ENCODE measurements at regions of chr5 and their contacts with region 1.

Region 1: GRCh38 chr5:150523472-150524350 is 15.8 kb downstream of the NDST1 start:
- DNase-seq: no peak

Region 2: DNA sequence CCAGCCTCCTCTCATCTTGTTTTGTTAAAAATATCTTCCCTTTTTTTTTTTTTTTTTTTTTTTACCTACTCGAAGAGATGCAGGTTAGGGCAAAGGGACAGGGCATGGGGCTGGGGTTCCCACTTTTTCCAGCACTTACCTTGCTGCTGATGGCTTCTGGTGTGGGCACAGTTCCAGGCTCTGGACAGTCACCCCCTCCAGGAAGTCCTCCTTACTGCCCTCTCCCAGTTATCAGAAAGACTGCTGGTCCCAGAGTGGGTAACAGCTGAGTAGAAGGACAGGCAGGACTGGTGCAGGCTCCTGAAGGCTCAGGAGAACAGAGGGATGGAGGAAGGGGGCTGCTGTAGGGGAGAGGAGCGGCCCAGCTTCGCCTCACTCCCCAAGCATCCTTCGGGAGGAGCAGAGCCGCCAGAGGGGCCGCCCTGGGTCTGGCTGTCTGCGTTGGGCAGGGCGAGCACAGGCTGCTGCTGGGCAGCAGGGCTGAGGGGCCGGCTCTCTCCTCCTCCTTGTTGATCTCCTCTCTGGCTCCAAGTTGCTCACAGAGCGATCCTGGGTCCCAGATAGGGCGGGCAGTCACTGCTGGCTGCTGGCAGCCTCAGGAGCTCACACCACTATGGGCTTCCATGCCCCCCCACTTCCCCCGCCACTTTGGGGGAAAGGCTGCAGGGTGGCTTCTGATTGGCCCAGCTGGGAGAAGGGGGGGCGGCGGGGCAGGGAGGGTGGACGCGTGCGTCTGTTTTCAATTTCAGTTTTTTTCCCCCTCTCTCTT is 368.3 kb before region 1 on chr5 and contains the start of gene PDGFRB:
- intact Hi-C with region 1: no loop called
- DNase-seq: peak; percentile 88
- total RNA-seq, gene PDGFRB: 54.6 TPM

Region 3: DNA sequence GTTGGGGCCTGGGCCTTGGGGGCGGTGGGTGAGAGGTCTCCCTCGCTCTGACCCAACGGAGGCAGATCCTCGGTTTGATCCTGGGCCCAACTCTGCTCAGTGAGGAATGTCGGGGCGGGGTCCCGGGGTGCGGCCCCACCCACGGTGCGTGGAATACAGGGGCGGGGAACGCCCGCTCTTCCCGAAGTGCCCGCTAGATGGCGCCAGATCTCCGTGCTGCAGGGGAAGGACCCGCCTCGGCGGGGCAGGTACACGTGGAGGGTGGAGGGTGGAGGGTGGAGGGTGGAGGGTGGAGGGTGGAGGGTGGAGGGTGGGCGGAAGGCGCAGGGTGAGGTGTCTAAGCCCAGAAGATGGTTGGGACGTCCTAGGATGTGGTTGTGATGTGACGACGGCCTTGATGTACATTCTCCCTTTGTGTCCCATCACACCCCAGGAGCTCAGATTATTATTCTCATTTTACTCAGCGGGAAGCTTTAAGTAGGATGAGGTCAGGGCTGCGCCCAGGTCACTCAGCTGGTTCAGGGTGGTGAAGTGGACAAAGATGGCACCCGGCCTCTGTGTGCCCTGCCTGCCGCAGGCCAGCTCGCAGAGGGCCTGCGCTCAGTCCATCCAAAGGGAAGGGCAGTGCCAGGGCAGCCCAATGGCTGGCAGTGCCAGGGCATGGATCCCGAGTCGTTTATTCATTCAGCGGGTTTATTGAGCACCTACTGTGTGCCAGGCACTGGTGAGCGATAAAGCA is 64.7 kb before region 1 on chr5:
- intact Hi-C with region 1: loop called (anchors 2 kb)
- DNase-seq: peak; percentile 92

Region 4: GRCh38 chr5:150486402-150487198 is 37.1 kb before region 1 on chr5:
- intact Hi-C with region 1: loop called (anchors 5 kb)
- DNase-seq: no peak

Region 5: DNA sequence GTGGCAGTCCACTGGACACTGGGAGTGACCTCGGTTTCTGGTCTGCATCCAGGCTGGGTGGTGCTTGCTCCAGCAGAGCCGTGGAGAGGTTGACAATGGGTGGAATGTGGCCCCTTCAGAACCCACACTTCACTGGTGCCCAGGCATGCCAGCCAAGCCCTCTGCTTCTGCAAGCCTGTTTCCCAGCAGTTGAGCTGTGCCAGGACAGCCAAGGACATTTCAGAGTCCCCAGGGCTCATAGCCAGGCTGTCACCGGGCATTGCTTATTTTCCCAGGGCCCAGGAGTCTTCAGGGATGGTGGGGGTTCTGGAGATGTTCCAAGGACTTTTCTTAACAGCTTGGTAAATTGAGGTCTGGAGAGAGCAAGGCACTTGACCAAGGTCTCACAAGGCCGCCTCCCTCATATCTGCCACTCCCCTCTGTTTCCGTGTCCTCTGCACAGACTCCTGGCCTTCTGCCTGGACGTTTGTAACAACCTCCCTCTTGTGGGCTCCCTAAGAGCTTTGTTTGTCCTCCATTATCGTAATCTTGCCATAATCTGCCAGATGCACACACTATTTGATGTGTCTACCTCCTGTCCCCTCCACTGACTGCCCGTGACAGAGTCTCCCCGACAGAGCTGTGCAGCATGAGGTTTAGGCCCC is 19.6 kb before region 1 on chr5:
- intact Hi-C with region 1: loop called (anchors 2 kb)
- DNase-seq: no peak